ENCODE measurements at regions of chrX and their contacts with region 1.

Region 1: GRCh38 chrX:17930850-17931249 is 69.8 kb upstream of the RAI2 start:
- H3K4me3 ChIP-seq: no peak overlapping the region
- H3K27ac ChIP-seq: no peak overlapping the region
- H3K4me1 ChIP-seq: no peaks in the 10 kb centered on the region
- CTCF ChIP-seq: peak; percentile 35; the same call in 1 of the 2 replicates

Region 2: DNA sequence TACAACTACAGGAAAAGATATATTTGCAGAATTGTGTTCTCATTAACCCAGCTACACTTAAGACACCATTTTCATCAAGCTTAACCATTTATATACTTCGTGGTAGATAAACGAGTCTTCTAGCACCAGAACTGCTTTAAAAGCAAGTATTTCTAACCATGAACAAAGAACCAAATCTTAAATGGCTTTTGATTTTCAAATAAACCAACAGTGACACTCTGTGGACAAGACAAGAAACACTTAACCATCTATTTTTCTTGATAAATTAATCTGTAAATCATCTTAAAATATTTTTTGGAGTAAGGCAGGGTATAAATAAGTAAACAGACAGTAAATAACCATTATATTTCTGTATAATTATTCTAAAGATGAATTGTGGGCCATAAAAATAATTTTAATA is 279.6 kb after region 1 on chrX:
- CTCF ChIA-PET with region 1: interaction called, 12 read pairs
- POLR2A ChIA-PET with region 1: no interaction called
- H3K4me3 ChIP-seq: no peak overlapping the region
- H3K27ac ChIP-seq: no peak overlapping the region
- H3K4me1 ChIP-seq: no peaks in the 10 kb centered on the region
- CTCF ChIP-seq: no peak

Measured in HEK293 (cell line).